ENCODE measurements at regions of chr15 and their contacts with region 1.

Region 1: GRCh38 chr15:99399618-99400017 is 148.3 kb downstream of the LRRC28 start:
- DNase-seq: no peak
- H3K4me3 ChIP-seq: no peak overlapping the region
- H3K27ac ChIP-seq: no peak overlapping the region
- H3K4me1 ChIP-seq: peaks cover 0 to 15% (median 4%) of the 10 kb centered on the region in 4 donors
- H3K27me3 ChIP-seq: no peaks in the 10 kb centered on the region
- CTCF ChIP-seq: no peak
- EP300 ChIP-seq: no peak
- POLR2A ChIP-seq: no peak

Region 2: GRCh38 chr15:99341786-99342185 is 57.8 kb before region 1 on chr15:
- in situ Hi-C with region 1: no loop called
- intact Hi-C with region 1: loop called (anchors 2 kb)
- DNase-seq: no peak
- H3K4me3 ChIP-seq: no peak overlapping the region
- H3K27ac ChIP-seq: no peak overlapping the region
- H3K4me1 ChIP-seq: no peaks in the 10 kb centered on the region
- H3K27me3 ChIP-seq: no peaks in the 10 kb centered on the region
- CTCF ChIP-seq: no peak
- EP300 ChIP-seq: no peak
- POLR2A ChIP-seq: no peak

Region 3: GRCh38 chr15:99476413-99477222 is 77.0 kb after region 1 on chr15:
- in situ Hi-C with region 1: no loop called
- intact Hi-C with region 1: no loop called
- DNase-seq: peak; percentile 46
- H3K4me3 ChIP-seq: no peak overlapping the region
- H3K27ac ChIP-seq: peak overlapping the region; percentile 65 to 82 (median 72)
- H3K4me1 ChIP-seq: peaks cover 15 to 25% (median 20%) of the 10 kb centered on the region in 4 donors
- H3K27me3 ChIP-seq: no peaks in the 10 kb centered on the region
- CTCF ChIP-seq: no peak
- EP300 ChIP-seq: no peak
- POLR2A ChIP-seq: no peak